ENCODE measurements at regions of chr19 and their contacts with region 1.

Region 1: GRCh38 chr19:55339048-55339888 is at the start of gene KMT5C:
- DNase-seq: peak; percentile 100
- H3K4me3 ChIP-seq: peak within 1 kb of the TSS; percentile 66 to 74
- H3K4me3 Mint-ChIP-seq: peak within 1 kb of the TSS; percentile 90 to 96 (median 93)
- H3K27ac ChIP-seq: peak within 1 kb of the TSS; percentile 90
- H3K27ac Mint-ChIP-seq: peak within 1 kb of the TSS; percentile 97 to 100 (median 99)
- H3K4me1 ChIP-seq: peaks cover 24% of the 10 kb centered on the region
- H3K4me1 Mint-ChIP-seq: peaks cover 9 to 35% (median 18%) of the 10 kb centered on the region in 4 donors
- H3K27me3 ChIP-seq: no peaks in the 10 kb centered on the region
- H3K27me3 Mint-ChIP-seq: peaks cover 1 to 12% of the 10 kb centered on the region in 2 donors
- total RNA-seq, gene KMT5C: 23.1 to 23.5 TPM

Region 2: DNA sequence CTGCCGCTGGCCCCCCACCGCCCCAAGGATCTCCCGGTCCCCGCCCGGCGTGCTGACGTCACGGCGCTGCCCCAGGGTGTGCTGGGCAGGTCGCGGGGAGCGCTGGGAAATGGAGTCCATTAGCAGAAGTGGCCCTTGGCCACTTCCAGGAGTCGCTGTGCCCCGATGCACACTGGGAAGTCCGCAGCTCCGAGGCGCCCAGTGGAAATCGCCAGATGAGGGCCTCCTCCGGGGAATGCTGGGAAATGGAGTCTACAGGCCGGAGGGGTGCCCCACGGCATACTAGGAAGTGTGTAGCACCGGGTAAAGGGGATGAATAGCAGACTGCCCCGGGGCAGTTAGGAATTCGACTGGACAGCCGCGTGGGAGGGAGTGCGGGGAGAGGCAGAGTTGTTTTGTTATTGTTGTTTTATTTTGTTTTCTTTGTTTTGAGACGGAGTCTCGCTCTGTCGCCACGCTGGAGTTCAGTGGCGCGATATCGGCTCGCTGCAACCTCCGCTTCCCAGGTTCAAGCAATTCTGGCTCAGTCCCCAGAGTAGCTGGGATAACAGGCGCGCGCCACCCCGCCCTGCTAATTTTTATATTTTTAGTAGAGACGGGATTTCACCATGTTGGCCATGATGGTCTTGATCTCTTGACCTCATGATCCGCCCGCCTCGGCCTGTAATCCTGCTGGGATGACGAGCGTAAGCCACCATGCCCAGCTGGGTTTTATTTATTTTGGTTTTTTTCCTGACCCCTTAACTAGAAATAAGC is 221.5 kb before region 1 on chr19 and contains the start of gene PPP1R12C:
- CTCF ChIA-PET with region 1: no interaction called
- POLR2A ChIA-PET with region 1: interaction called, 6 read pairs
- intact Hi-C with region 1: loop called (anchors 1 kb)
- DNase-seq: peak; percentile 94 to 97 (median 96)
- H3K4me3 ChIP-seq: peak within 1 kb of the TSS; percentile 96 to 97
- H3K4me3 Mint-ChIP-seq: peak within 1 kb of the TSS; percentile 98 to 100 (median 99)
- H3K27ac ChIP-seq: peak within 1 kb of the TSS; percentile 73
- H3K27ac Mint-ChIP-seq: peak within 1 kb of the TSS; percentile 96 to 99 (median 98)
- H3K4me1 ChIP-seq: peaks cover 31% of the 10 kb centered on the region
- H3K4me1 Mint-ChIP-seq: peaks cover 15 to 53% (median 34%) of the 10 kb centered on the region in 4 donors
- H3K27me3 ChIP-seq: no peaks in the 10 kb centered on the region
- H3K27me3 Mint-ChIP-seq: peaks cover 3 to 6% of the 10 kb centered on the region in 2 donors
- total RNA-seq, gene PPP1R12C: 165 TPM

Region 3: DNA sequence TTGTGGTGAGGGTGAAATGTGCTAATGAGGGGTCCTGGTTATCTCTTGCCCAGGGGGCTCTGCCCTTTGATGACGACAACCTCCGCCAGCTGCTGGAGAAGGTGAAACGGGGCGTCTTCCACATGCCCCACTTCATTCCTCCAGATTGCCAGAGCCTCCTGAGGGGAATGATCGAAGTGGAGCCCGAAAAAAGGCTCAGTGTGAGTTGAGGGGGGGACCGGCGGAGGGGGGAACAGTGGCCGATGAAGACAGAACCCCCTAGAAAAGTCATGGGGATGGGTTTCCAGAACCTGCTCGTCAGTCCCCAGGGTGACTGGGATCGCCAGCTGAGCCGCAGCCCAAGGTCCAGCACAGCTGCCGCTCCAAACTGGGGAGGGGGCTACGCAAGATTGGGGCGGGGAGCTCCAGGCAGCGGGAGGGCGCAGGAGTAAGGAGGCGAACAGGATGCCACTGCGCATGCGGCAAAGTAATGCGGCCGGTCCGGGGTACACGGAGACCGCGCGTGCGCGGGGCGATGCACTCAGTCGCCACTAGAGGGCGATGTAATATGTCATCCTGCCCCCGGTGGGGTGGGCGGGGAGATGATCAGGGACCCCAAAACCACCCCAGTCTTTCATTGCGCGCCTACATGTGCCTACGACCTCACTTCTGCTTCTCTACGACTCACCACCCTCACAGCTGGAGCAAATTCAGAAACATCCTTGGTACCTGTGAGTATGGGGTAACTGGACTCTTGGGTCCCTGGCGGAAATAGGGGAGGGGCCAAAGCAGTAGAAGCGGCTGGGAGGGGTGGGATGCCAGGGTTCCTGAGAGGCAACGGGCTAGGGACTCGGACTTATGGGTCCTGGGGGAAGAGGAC is 37.6 kb before region 1 on chr19:
- CTCF ChIA-PET with region 1: interaction called, 30 read pairs
- POLR2A ChIA-PET with region 1: interaction called, 22 read pairs
- intact Hi-C with region 1: loop called (anchors 1 kb)
- DNase-seq: peak; percentile 87 to 90 (median 88)
- H3K4me3 ChIP-seq: peak overlapping the region; percentile 34 to 49
- H3K4me3 Mint-ChIP-seq: peak overlapping the region; percentile 75 to 86 (median 80)
- H3K27ac ChIP-seq: peak overlapping the region; percentile 22
- H3K27ac Mint-ChIP-seq: peak overlapping the region; percentile 57 to 94 (median 82)
- H3K4me1 ChIP-seq: peaks cover 11% of the 10 kb centered on the region
- H3K4me1 Mint-ChIP-seq: peaks cover 6 to 21% (median 10%) of the 10 kb centered on the region in 4 donors
- H3K27me3 ChIP-seq: no peaks in the 10 kb centered on the region
- H3K27me3 Mint-ChIP-seq: no peaks in the 10 kb centered on the region

Region 4: DNA sequence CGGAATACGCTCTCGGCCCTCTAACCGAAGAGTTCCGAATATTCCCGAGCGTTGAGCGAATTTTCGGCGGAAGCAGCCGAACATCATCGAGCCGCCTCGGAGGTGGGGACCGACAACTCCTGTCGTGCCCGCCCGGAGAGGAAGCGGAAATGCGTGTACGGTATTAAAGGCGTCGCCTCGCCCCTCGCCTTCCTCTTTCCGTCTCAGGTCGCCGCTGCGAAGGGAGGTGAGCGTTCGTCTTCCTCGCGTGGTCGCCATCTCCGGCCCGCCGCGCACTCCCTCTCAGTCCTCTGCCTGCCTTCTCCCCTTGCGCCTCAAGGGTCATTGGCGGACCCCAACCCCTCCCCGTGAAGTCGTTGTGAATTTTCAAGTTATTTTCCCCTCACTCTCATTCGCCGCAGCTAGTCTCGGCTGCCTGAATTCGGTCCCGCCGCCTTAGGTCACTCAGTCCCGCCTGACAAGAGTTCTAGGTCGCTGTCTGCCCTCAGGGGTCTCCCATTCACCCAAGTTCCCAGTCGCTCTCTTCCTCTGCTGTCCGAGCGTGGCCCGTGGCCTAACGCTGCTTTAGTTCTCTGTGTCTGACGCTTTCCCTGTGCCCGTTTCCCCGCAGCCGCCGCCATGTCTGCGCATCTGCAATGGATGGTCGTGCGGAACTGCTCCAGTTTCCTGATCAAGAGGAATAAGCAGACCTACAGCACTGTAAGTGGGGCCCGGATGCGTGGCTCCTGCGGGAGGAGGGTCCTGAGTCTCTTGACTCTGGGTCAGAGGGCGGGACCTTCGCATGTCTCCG is 46.7 kb after region 1 on chr19 and contains the start of gene RPL28:
- CTCF ChIA-PET with region 1: interaction called, 23 read pairs
- POLR2A ChIA-PET with region 1: interaction called, 94 read pairs
- intact Hi-C with region 1: loop called (anchors 1 kb)
- DNase-seq: peak; percentile 98 to 100 (median 99)
- H3K4me3 ChIP-seq: peak within 1 kb of the TSS; percentile 85 to 88
- H3K4me3 Mint-ChIP-seq: peak within 1 kb of the TSS; percentile 99 to 100 (median 100)
- H3K27ac ChIP-seq: peak within 1 kb of the TSS; percentile 94
- H3K27ac Mint-ChIP-seq: peak within 1 kb of the TSS; percentile 98 to 100 (median 99)
- H3K4me1 ChIP-seq: peaks cover 68% of the 10 kb centered on the region
- H3K4me1 Mint-ChIP-seq: peaks cover 39 to 88% (median 63%) of the 10 kb centered on the region in 4 donors
- H3K27me3 ChIP-seq: no peaks in the 10 kb centered on the region
- H3K27me3 Mint-ChIP-seq: no peaks in the 10 kb centered on the region
- total RNA-seq, gene RPL28: 3,136 to 3,159 TPM

Region 5: GRCh38 chr19:55461259-55461973 is 122.1 kb after region 1 on chr19 and contains the start of gene ISOC2:
- CTCF ChIA-PET with region 1: no interaction called
- POLR2A ChIA-PET with region 1: interaction called, 10 read pairs
- intact Hi-C with region 1: no loop called
- DNase-seq: peak; percentile 100
- H3K4me3 ChIP-seq: peak within 1 kb of the TSS; percentile 82 to 97
- H3K4me3 Mint-ChIP-seq: peak within 1 kb of the TSS; percentile 86 to 97 (median 92)
- H3K27ac ChIP-seq: peak within 1 kb of the TSS; percentile 67
- H3K27ac Mint-ChIP-seq: peak within 1 kb of the TSS; percentile 72 to 97 (median 91)
- H3K4me1 ChIP-seq: peaks cover 18% of the 10 kb centered on the region
- H3K4me1 Mint-ChIP-seq: peaks cover 11 to 31% (median 21%) of the 10 kb centered on the region in 4 donors
- H3K27me3 ChIP-seq: no peaks in the 10 kb centered on the region
- H3K27me3 Mint-ChIP-seq: no peaks in the 10 kb centered on the region
- total RNA-seq, gene ISOC2: 9.9 to 13.7 TPM

Region 6: GRCh38 chr19:55605207-55605636 is 266.0 kb after region 1 on chr19:
- CTCF ChIA-PET with region 1: no interaction called
- POLR2A ChIA-PET with region 1: interaction called, 18 read pairs
- intact Hi-C with region 1: no loop called
- DNase-seq: peak; percentile 95 to 98 (median 97)
- H3K4me3 ChIP-seq: peak overlapping the region; percentile 43 to 83
- H3K4me3 Mint-ChIP-seq: peak overlapping the region; percentile 79 to 93 (median 84)
- H3K27ac ChIP-seq: peak overlapping the region; percentile 88
- H3K27ac Mint-ChIP-seq: peak overlapping the region; percentile 83 to 97 (median 94)
- H3K4me1 ChIP-seq: peaks cover 42% of the 10 kb centered on the region
- H3K4me1 Mint-ChIP-seq: peaks cover 41 to 73% (median 48%) of the 10 kb centered on the region in 4 donors
- H3K27me3 ChIP-seq: no peaks in the 10 kb centered on the region
- H3K27me3 Mint-ChIP-seq: no peaks in the 10 kb centered on the region

Region 7: GRCh38 chr19:55704494-55705245 is 365.4 kb after region 1 on chr19:
- CTCF ChIA-PET with region 1: no interaction called
- POLR2A ChIA-PET with region 1: no interaction called
- intact Hi-C with region 1: no loop called
- DNase-seq: no peak
- H3K4me3 ChIP-seq: no peak overlapping the region
- H3K4me3 Mint-ChIP-seq: no peak overlapping the region
- H3K27ac ChIP-seq: no peak overlapping the region
- H3K27ac Mint-ChIP-seq: peak overlapping the region in 1 of 7 donors; percentile 51
- H3K4me1 ChIP-seq: no peaks in the 10 kb centered on the region
- H3K4me1 Mint-ChIP-seq: peaks cover 0 to 7% (median 2%) of the 10 kb centered on the region in 4 donors
- H3K27me3 ChIP-seq: no peaks in the 10 kb centered on the region
- H3K27me3 Mint-ChIP-seq: no peaks in the 10 kb centered on the region